Adrenal gland (tissue), 19 donors: ENCODE measurements at regions of chr1 and their contacts with region 1.

Region 1: GRCh38 chr1:211514030-211514754 is 22.2 kb upstream of the RD3 start:
- DNase-seq: peak; percentile 81 to 92 (median 88)
- H3K4me3 ChIP-seq: no peak overlapping the region
- H3K27ac ChIP-seq: no peak overlapping the region
- H3K4me1 ChIP-seq: peaks cover 0 to 13% of the 10 kb centered on the region in 2 donors
- H3K27me3 ChIP-seq: no peaks in the 10 kb centered on the region
- CTCF ChIP-seq: peak; percentile 63 to 81 (median 76)
- POLR2A ChIP-seq: no peak

Region 2: DNA sequence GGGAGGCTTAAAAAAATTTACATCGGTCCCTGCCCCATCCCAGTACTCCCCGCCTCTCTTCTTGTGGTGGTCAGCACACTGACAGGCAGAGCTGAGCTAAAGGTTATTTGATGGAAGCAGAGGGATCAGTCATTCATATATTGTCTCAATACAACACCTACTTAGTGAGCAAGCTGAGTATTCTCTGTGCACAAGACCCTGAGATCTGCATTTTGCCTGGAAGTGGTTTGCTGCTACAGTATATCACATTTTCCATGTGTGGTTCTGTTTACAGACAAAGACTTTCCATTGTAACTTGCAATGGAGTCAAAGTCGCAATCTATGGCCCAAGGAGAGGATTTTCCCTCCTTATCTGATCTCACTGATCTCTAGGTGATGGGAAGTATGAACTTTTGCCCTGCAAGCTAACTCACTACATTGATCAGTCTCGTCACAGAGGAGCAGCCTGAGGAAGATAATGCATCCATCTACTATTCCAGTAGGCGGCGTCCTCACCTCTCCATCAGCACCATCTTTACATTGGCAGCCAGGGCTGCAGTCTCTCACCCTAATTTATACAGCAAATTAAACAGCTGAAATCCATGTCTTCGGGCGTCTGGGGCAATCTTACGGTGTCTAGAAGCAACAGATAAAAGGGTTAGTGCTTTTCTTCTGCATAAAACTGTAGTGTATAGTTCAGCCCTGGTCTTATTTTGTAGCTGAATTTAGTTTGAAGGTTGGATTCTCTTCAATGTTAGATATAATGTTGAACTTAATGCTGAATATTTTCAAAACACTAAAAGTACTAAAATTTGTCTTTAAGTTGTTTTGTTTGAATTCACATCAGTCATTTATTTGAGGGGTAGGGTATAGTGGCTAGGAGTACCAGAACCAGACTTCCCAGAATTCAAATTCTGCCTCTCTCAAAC is 190.8 kb before region 1 on chr1:
- intact Hi-C with region 1: loop called in 1 of 2 experiments (anchors 10 kb)
- DNase-seq: peak; percentile 41 to 82 (median 55)
- H3K4me3 ChIP-seq: no peak overlapping the region
- H3K27ac ChIP-seq: no peak overlapping the region
- H3K4me1 ChIP-seq: peaks cover 5 to 11% of the 10 kb centered on the region in 2 donors
- H3K27me3 ChIP-seq: no peaks in the 10 kb centered on the region
- CTCF ChIP-seq: peak; percentile 53 to 76 (median 72)
- POLR2A ChIP-seq: no peak

Region 3: GRCh38 chr1:211415700-211416099 is 98.5 kb before region 1 on chr1:
- intact Hi-C with region 1: loop called in 1 of 2 experiments (anchors 10 kb)
- DNase-seq: no peak
- H3K4me3 ChIP-seq: no peak overlapping the region
- H3K27ac ChIP-seq: peak overlapping the region in 1 of 5 donors; percentile 48
- H3K4me1 ChIP-seq: no peaks in the 10 kb centered on the region
- H3K27me3 ChIP-seq: no peaks in the 10 kb centered on the region
- CTCF ChIP-seq: no peak
- POLR2A ChIP-seq: no peak

Region 4: GRCh38 chr1:211476200-211476849 is 37.9 kb before region 1 on chr1:
- intact Hi-C with region 1: loop called in 1 of 2 experiments (anchors 5 kb)
- DNase-seq: peak; percentile 69 to 89 (median 81)
- H3K4me3 ChIP-seq: no peak overlapping the region
- H3K27ac ChIP-seq: no peak overlapping the region
- H3K4me1 ChIP-seq: peaks cover 0 to 10% of the 10 kb centered on the region in 2 donors
- H3K27me3 ChIP-seq: no peaks in the 10 kb centered on the region
- CTCF ChIP-seq: peak; percentile 53 to 78 (median 66)
- POLR2A ChIP-seq: no peak

Region 5: DNA sequence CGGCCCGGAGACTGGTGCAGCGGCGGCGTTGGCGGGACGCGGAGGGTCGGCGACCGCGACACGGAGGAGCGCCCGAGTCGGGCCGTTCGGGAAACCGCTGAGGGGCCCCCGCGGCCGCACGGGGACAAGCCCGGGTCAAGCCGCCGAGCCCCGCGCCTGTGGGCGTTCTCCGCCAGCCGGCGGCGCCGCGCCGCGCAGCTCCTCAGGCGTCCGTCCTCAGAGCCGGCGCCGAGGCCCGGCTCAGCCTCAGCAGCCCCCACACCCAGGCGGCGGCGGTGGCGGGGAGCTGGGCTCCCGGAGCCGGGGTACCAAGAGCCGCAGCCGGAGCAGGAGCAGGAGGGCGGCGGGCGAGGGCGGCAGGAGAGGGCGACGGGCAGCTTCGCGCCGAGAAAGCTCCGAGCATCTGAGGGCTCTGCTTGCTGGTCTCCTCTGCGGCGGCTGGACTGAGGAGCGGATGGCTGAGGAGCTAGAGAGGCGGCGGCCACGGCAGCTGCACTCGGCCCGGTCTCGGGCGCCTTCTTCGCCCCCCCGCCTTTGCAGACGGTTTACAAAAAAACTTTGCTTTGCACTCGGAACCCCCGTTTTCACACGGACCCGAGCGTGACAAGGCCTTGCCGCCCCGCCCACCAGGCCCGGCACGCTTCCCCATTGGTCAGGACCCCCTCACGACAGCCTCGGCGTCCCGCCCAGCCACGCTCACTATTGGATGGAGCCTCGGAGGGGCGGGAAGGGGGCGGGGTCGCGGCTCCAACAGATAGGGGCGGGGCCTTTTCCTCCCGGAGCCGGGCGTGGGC is 64.6 kb after region 1 on chr1 and contains the start of gene SLC30A1:
- intact Hi-C with region 1: loop called in 1 of 2 experiments (anchors 5 kb)
- DNase-seq: peak; percentile 100
- H3K4me3 ChIP-seq: peak within 1 kb of the TSS; percentile 97 to 98 (median 97)
- H3K27ac ChIP-seq: peak within 1 kb of the TSS; percentile 71 to 95 (median 94)
- H3K4me1 ChIP-seq: peaks cover 32 to 47% of the 10 kb centered on the region in 2 donors
- H3K27me3 ChIP-seq: no peaks in the 10 kb centered on the region
- CTCF ChIP-seq: no peak
- POLR2A ChIP-seq: peak; percentile 86 to 97
- total RNA-seq, gene SLC30A1: 22.1 to 82.6 (median 41.9) TPM

Region 6: GRCh38 chr1:211654838-211655787 is 140.9 kb after region 1 on chr1:
- intact Hi-C with region 1: loop called (anchors 2 to 5 kb)
- DNase-seq: peak; percentile 85 to 96 (median 93)
- H3K4me3 ChIP-seq: peak overlapping the region in 1 of 4 donors; percentile 35
- H3K27ac ChIP-seq: no peak overlapping the region
- H3K4me1 ChIP-seq: no peaks in the 10 kb centered on the region
- H3K27me3 ChIP-seq: no peaks in the 10 kb centered on the region
- CTCF ChIP-seq: peak; percentile 89 to 97 (median 92)
- POLR2A ChIP-seq: no peak

Region 7: DNA sequence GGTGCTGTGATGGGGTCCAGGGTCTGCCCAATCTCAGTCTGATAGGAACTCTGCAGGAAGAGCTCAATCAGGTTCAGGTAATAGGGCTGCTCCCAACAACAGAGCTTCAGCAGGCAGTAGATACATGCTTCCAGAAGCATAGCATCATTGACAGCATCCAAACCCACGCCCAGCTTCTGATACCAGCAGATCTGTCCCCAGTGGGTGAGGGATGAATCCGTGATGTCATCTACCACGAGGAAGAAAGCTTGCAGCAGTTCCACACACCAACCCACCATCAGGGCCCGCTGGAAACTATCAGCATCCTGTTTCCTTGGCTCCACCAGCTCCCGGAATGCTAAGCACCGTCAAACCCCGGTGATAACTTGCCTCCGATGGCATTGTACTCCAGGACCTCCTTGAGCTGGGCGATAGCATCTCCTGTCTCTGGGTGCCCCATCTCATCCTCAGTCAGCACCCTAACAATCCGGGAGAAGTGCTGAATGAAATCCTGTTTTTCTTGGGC is 146.6 kb after region 1 on chr1:
- intact Hi-C with region 1: loop called in 1 of 2 experiments (anchors 2 kb)
- DNase-seq: no peak
- H3K4me3 ChIP-seq: no peak overlapping the region
- H3K27ac ChIP-seq: no peak overlapping the region
- H3K4me1 ChIP-seq: no peaks in the 10 kb centered on the region
- H3K27me3 ChIP-seq: no peaks in the 10 kb centered on the region
- CTCF ChIP-seq: no peak
- POLR2A ChIP-seq: no peak